ENCODE measurements at regions of chr9 and their contacts with region 1.

Region 1: DNA sequence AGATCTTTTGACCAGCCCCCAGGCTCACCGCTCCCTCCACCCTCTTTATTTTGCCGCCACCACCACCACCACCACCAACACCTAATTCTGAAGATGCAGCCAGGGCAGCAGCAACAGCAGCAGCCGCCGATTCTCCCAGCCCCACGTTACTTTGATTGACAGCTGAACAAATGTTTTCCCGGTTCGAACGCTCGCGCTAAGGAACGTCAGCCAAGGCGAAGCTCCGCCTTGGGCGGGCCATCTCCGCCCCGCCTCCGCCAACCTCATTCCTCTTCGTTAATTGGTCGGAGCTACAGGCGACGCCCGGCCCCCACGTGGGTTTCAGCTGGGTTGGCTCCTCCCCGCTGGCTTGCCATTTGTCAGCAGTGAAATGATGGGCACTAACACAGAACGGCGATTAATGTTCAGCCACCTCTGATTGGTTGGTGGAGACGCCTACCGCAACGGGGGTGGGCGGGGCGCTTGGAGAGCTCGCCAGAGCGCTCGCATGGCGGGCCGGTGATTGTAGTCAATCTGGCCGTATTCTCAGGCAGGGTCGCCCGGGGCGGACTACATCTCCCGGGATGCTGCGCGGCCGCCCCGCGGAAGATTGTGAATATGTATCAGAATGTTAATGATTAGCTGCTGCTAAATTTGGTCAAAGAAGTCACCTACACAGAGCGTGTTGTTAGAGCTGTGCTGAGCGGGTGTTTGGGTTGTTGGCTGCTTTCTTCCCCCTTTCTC is at the start of gene TLE4:
- DNase-seq: peak; percentile 99
- H3K4me3 Mint-ChIP-seq: peak within 1 kb of the TSS; percentile 80
- H3K27ac Mint-ChIP-seq: peak within 1 kb of the TSS; percentile 46
- H3K4me1 Mint-ChIP-seq: peaks cover 26% of the 10 kb centered on the region
- H3K27me3 Mint-ChIP-seq: peaks cover 6% of the 10 kb centered on the region
- total RNA-seq, gene TLE4: 11.2 to 13.1 TPM

Region 2: DNA sequence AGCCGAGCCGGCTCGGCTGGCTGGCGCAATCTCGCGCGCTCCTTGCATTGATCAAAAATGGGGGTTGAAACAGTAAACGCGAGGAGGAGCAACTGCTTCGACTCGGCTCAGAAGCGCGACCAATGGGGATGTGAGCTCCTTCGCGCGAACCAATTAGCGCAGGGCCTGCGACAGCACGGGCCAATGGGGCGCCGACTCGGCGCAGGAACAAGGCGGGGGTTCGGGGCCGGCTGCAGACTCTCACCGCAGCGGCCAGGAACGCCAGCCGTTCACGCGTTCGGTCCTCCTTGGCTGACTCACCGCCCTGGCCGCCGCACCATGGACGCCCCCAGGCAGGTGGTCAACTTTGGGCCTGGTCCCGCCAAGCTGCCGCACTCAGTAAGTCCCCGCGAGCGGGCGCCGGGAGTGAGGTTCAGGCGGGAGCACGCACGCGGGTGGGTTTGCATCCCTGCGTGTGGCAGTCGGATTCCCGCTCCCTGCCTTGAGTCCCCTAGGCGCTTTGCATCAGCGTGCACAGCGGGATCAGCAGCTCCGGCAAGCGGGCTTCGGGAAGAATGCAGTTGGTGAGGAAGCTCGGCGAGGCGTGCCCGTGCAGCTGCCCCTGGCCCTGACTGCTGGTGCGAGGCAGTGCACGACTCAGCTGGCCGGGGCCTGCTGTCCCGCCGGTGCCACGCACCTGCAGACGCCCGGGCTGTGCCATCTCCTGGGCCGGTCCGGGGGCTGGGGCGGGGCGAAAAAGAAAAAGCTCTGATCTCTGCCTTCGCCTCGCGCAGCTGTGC is 1274.4 kb before region 1 on chr9 and contains the start of gene PSAT1:
- CTCF ChIA-PET with region 1: no interaction called
- intact Hi-C with region 1: loop called (anchors 1 kb)
- DNase-seq: peak; percentile 95
- H3K4me3 Mint-ChIP-seq: peak within 1 kb of the TSS; percentile 81
- H3K27ac Mint-ChIP-seq: peak within 1 kb of the TSS; percentile 94
- H3K4me1 Mint-ChIP-seq: peaks cover 40% of the 10 kb centered on the region
- H3K27me3 Mint-ChIP-seq: no peaks in the 10 kb centered on the region
- total RNA-seq, gene PSAT1: 235 to 240 TPM

Region 3: DNA sequence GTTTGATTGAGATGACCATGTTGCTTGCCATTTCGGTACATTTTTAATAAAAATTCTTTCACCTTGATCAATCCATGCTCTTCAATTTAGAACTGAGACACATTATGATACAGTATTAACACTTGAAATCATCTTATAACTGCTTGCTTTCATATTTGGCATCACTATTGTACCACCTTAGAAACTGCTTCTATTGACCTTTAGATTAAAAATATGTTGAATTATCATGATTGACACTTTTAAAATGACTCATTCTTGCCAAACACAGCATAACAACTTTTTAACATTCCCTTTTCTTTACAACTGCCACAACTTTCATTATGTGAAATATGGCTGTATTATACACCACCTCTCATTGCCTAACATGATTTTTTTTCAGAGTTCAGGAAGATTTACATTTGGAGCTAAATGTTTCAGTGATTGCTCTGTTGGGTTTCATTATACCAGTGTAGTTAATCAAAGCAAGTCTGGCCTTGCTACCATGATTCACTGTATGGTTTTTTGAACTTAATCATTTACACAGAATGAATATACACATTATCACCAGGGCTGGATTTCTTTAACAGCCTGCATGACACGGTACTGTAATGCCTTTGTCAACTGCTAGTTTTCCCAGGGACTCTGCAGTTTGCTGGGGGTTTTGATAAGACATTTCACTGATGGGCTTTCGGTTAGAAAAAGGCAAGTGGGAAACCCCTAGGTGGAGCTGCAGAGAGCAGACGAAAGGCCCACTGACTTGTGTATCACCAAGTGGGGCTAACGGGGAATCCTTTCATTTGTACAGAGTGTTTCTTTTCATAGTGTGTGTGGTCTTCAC is 93.3 kb before region 1 on chr9:
- CTCF ChIA-PET with region 1: interaction called, 3 read pairs
- intact Hi-C with region 1: loop called (anchors 1 kb)
- DNase-seq: peak; percentile 55
- H3K4me3 Mint-ChIP-seq: no peak overlapping the region
- H3K27ac Mint-ChIP-seq: no peak overlapping the region
- H3K4me1 Mint-ChIP-seq: peaks cover 12% of the 10 kb centered on the region
- H3K27me3 Mint-ChIP-seq: no peaks in the 10 kb centered on the region

Region 4: DNA sequence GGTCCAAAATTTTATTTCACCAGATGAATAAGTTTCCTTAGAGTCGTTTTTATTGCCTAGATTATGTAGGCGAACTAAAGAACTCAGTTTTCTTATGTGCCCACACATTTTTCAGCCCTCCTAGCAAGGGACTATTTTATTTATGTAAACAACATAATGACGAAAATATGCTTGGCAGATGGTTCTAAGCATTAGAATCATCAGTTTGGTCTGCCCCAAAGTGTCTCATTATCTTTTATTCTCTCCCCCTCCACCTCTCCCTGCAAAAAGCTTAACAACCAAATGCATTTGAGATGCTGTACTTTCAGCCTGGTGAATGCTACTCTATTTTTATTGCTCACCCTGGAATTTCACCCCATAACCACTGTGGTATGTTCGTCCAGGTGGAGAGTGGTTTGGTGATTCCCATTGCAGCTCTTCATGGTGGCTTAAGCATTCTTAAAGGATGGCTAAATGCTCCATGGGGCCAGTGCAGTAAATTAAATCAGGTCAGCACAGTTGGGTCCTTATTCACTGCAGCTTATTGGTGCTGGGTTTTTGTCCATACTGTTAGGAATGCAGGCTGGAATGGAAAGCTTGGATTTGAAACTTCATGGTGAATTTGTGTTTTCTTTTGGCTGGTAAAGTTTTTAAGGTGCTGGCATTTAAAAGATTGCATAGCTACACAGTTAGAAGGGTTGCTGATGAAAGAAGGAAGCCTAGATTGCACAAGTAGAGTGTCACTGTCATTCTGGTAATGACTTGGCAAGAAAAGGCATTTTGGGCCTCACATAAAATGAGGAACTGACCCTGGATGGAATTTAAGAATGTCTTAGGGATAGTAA is 39.5 kb after region 1 on chr9:
- CTCF ChIA-PET with region 1: no interaction called
- intact Hi-C with region 1: loop called (anchors 1 kb)
- DNase-seq: no peak
- H3K4me3 Mint-ChIP-seq: no peak overlapping the region
- H3K27ac Mint-ChIP-seq: no peak overlapping the region
- H3K4me1 Mint-ChIP-seq: peaks cover 50% of the 10 kb centered on the region
- H3K27me3 Mint-ChIP-seq: no peaks in the 10 kb centered on the region

Region 5: GRCh38 chr9:79812507-79813257 is 241.2 kb after region 1 on chr9:
- CTCF ChIA-PET with region 1: interaction called, 3 read pairs
- intact Hi-C with region 1: loop called (anchors 2 kb)
- DNase-seq: peak; percentile 56
- H3K4me3 Mint-ChIP-seq: peak overlapping the region; percentile 47
- H3K27ac Mint-ChIP-seq: no peak overlapping the region
- H3K4me1 Mint-ChIP-seq: peaks cover 23% of the 10 kb centered on the region
- H3K27me3 Mint-ChIP-seq: no peaks in the 10 kb centered on the region

Region 6: DNA sequence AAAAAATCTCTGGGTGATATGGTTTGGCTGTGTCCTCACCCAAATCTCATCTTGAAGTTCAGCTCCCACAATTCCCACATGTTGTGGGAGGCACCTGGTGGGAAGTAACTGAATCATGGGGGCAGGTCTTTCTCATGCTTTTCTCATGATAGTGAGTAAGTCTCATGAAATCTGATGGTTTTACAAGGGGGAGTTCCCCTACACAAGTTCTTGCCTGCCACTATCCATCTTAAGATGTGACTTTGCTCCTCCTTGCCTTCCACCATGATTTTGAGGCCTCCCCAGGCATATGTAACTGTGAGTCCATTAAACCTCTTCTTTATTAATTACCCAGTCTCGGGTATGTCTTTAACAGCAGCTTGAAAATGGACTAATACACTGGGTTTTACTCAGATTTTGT is 514.2 kb after region 1 on chr9:
- CTCF ChIA-PET with region 1: no interaction called
- intact Hi-C with region 1: loop called (anchors 1 kb)
- DNase-seq: peak; percentile 6
- H3K4me3 Mint-ChIP-seq: no peak overlapping the region
- H3K27ac Mint-ChIP-seq: no peak overlapping the region
- H3K4me1 Mint-ChIP-seq: peaks cover 20% of the 10 kb centered on the region
- H3K27me3 Mint-ChIP-seq: peaks cover 2% of the 10 kb centered on the region

Measured in activated naive CD4-positive, alpha-beta T cell treated with anti-CD3 and anti-CD28 coated beads for 36 hours (primary cell).